B cell (primary cell): ENCODE measurements at regions of chr22 and their contacts with region 1.

Region 1: GRCh38 chr22:23069502-23070357 is 589 bp upstream of the GNAZ start:
- DNase-seq: peak; percentile 94
- ATAC-seq: peak; percentile 97
- H3K4me3 ChIP-seq: peak overlapping the region; percentile 9 to 73 (median 47)
- H3K4me3 Mint-ChIP-seq: peak overlapping the region; percentile 94
- H3K27ac ChIP-seq: no peak overlapping the region
- H3K27ac Mint-ChIP-seq: peak overlapping the region; percentile 87
- H3K4me1 ChIP-seq: peaks cover 12 to 38% of the 10 kb centered on the region in 2 donors
- H3K4me1 Mint-ChIP-seq: peaks cover 40% of the 10 kb centered on the region
- H3K27me3 ChIP-seq: peaks cover 0 to 3% (median 0%) of the 10 kb centered on the region in 4 experiments
- H3K27me3 Mint-ChIP-seq: no peaks in the 10 kb centered on the region
- CTCF ChIP-seq: no peak

Region 2: DNA sequence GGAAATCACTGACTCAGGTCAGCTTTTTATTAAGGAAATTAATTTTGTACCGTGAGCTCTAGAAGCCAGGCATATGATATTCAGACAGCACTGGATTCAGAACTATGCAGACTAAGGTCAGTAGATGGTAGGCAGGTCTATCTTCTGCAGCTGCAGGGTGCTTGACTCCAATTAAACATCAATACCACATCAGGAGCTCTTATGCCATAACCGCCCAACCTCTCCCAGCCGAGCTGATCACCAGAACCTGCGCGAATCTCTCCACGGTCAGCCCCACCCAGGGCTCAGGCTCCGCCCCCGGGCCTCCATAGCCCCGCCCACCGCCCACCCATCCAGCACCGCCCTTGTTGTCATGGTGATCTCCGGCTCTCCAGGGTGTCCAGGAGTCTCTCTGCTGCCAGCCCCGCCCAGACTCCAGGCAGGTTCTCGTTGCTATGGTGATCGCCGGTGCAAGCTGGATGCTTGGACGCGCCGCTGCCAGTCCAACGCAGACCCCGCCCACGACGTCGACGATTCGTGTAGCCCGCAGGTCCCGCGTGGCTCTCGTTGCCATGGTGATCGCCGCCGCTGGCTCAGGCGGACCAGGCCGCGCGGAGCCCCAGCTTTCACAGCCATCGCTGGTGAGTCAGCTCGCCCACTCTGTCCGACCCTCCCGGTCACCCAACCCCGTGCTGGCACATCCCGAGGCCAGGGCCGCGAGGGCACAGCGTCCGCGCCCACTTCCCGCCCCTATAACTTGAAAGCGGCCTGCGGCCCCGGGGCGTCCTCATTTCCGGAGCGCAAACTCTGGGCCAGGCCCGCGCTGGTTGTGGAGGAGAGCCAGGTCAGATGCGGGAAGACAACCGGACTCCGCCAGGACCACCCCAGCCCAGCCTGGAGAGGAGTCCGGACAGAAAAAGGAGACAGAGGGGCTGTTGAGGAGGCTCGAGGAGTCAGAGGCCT is 75.5 kb after region 1 on chr22 and contains the start of gene RAB36:
- CTCF ChIA-PET with region 1: interaction called, 4 read pairs
- POLR2A ChIA-PET with region 1: no interaction called
- intact Hi-C with region 1: loop called (anchors 5 kb)
- DNase-seq: peak; percentile 99
- ATAC-seq: peak; percentile 60
- H3K4me3 ChIP-seq: peak within 1 kb of the TSS; percentile 16 to 52 (median 43)
- H3K4me3 Mint-ChIP-seq: peak within 1 kb of the TSS; percentile 89
- H3K27ac ChIP-seq: peak within 1 kb of the TSS; percentile 65 to 83
- H3K27ac Mint-ChIP-seq: peak within 1 kb of the TSS; percentile 96
- H3K4me1 ChIP-seq: peaks cover 41 to 58% of the 10 kb centered on the region in 2 donors
- H3K4me1 Mint-ChIP-seq: peaks cover 44% of the 10 kb centered on the region
- H3K27me3 ChIP-seq: no peaks in the 10 kb centered on the region
- H3K27me3 Mint-ChIP-seq: no peaks in the 10 kb centered on the region
- CTCF ChIP-seq: no peak
- total RNA-seq, gene RAB36: 1.9 and 3.3 TPM in 2 replicates

Region 3: GRCh38 chr22:23192181-23192957 is 122.6 kb after region 1 on chr22:
- CTCF ChIA-PET with region 1: no interaction called
- POLR2A ChIA-PET with region 1: no interaction called
- intact Hi-C with region 1: no loop called
- DNase-seq: no peak
- ATAC-seq: no peak
- H3K4me3 ChIP-seq: no peak overlapping the region
- H3K4me3 Mint-ChIP-seq: no peak overlapping the region
- H3K27ac ChIP-seq: no peak overlapping the region
- H3K27ac Mint-ChIP-seq: no peak overlapping the region
- H3K4me1 ChIP-seq: peaks cover 0 to 6% of the 10 kb centered on the region in 2 donors
- H3K4me1 Mint-ChIP-seq: peaks cover 1% of the 10 kb centered on the region
- H3K27me3 ChIP-seq: no peaks in the 10 kb centered on the region
- H3K27me3 Mint-ChIP-seq: no peaks in the 10 kb centered on the region
- CTCF ChIP-seq: no peak